Posterior cingulate gyrus (tissue), 11 donors: ENCODE measurements at regions of chr2 and their contacts with region 1.

Region 1: GRCh38 chr2:227132986-227133385 is 31.0 kb downstream of the COL4A4 start:
- DNase-seq: peak in 1 of 10 donors; percentile 29

Region 2: DNA sequence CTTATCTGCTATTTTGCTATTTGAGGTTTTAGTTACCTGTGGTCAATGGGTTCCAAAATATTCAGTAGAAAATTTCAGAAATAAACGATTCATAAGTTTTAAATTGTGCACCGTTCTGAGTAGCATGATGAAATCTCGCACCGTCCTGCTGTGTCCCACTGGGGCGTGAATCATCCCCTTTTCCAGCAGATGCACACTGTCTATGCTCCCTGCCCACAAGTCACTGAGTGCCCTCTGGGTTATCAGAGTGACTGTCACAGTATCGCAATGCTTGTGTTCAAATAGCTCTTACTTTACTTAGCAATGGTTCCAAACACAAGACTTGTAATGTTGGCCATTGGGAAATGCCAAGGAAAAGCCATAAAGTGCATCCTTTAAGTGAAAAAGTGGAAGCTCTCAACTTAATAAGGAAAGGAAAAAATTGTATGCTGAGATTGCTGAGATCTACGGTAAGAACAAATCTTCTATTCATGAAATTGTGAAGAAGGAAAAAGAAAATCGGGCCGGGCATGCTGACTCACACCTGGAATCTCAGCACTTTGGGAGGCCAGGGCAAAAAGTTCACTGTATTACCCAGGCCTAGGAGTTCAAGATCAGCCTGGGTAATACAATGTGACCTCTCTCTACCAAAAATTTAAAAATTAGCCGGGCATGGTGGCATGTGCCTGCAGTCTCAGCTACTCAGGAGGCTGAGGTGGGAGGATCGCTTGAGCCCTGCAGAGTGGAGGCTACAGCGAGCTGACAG is 44.8 kb after region 1 on chr2:
- intact Hi-C with region 1: no loop called
- DNase-seq: no peak

Region 3: DNA sequence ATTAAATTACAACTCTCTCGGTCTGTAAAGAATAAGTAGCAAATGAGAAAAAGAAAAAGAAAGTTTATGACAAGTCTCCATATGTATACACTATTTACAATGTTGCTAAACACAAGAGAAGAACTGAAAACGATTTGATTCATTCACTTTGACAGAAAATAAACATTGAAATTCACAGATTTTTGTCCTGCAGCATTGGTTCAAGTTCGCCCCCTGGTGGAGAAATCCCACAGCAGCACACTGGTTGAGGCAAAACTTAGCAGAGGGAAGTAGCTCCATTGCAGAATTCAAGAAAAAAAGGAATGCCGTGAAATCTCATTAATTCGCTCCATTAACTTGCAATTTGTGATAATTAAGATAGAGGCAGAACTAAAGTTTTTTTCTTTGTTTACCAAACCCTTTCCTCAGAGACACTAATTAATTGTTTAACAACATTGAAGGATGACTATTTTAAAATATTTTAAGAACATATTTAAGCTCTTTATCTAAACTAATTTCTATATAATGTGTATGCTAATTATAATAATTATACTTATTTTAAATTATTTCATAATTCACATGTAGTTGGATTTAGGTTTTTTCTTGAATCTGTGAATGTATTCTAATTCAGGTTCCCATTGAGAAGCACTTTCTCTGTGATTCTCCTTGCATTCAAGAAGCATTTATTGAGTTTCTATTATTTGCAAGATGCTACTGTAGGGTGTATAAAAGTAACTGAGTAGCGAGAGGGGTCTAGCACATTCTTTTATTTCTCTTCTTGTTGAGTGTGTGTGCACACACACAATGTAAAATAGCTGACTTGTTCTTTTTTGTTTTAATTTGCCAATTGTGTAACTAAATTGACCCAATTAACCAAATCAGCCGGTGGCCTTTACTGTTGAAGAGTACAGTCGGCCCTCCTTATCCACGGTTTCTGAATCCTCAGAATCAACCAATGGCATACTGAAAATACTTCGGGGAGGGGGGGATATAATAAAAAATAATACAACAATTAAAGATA is 105.6 kb after region 1 on chr2:
- intact Hi-C with region 1: loop called (anchors 1 kb)
- DNase-seq: peak; percentile 61 to 95 (median 76)